ENCODE measurements at regions of chr3 and their contacts with region 1.

Region 1: GRCh38 chr3:57397175-57398026 is 104.9 kb upstream of the ASB14 start:
- DNase-seq: no peak
- H3K4me3 ChIP-seq: no peak overlapping the region
- H3K27ac ChIP-seq: no peak overlapping the region
- H3K4me1 ChIP-seq: peaks cover 0 to 2% (median 0%) of the 10 kb centered on the region in 4 donors
- H3K27me3 ChIP-seq: no peaks in the 10 kb centered on the region
- CTCF ChIP-seq: peak; percentile 26 to 79 (median 68)
- EP300 ChIP-seq: no peak
- POLR2A ChIP-seq: no peak

Region 2: DNA sequence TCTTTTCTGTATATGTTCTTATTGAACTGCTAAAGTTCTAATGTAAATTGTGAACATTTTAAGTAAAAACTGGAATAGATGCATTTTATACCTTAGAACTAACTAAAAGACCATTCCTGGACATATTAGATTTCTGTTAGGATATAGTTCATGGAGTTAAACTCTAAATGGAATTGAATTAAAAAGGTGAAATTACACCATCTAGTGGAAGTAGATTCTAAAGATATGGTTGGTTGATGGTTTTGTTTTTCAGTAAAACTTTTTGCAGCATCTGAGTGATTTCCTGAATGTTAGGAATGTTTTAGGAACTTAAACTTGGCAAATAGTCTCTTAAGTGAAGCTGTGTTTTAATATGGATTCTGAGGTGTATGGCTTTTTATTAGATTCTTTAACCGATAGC is 455.5 kb after region 1 on chr3:
- intact Hi-C with region 1: loop called (anchors 10 kb)
- DNase-seq: no peak
- H3K4me3 ChIP-seq: no peak overlapping the region
- H3K27ac ChIP-seq: no peak overlapping the region
- H3K4me1 ChIP-seq: peaks cover 0 to 7% (median 3%) of the 10 kb centered on the region in 4 donors
- H3K27me3 ChIP-seq: no peaks in the 10 kb centered on the region
- CTCF ChIP-seq: peak in 1 of 4 experiments; percentile 23
- EP300 ChIP-seq: no peak
- POLR2A ChIP-seq: no peak

Measured in sigmoid colon (tissue), 7 donors.